PC-9 (cell line): ENCODE measurements at regions of chr6 and their contacts with region 1.

Region 1: DNA sequence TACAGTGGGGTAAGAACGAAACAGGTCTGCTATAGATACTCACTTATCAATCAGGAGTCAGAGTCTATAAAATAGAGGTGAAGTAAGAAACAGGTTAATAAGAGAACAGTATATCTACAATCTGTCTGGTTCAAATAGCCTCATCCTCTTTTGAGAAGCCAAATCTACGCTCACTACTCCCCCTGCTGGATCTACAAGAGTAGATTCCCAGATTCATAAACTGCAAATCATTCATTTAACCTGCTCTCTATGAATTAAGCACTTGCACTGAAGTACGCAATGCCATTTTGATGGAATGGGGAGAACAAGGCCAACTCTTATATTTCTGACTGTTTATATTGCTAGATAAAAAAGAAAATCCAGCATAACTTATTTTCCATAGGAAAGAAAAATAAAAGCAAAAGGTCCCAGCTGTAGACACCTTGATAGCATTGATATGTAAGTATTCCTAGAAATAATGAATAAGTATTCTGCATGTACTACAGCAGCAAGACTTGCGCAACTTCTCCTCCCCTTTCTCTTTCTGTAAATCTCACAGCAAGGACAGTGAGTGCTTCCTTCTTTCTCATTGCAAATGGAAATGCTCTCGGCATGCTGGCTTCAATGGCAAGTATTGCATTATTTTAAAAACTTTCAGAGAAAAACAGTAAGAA is 92.3 kb downstream of the RFX6 start:
- DNase-seq: peak in 1 of 2 experiments; percentile 15
- H3K4me3 ChIP-seq: no peak overlapping the region
- H3K27ac ChIP-seq: no peak overlapping the region
- H3K4me1 ChIP-seq: no peaks in the 10 kb centered on the region
- H3K27me3 ChIP-seq: no peaks in the 10 kb centered on the region
- CTCF ChIP-seq: peak; percentile 90

Region 2: DNA sequence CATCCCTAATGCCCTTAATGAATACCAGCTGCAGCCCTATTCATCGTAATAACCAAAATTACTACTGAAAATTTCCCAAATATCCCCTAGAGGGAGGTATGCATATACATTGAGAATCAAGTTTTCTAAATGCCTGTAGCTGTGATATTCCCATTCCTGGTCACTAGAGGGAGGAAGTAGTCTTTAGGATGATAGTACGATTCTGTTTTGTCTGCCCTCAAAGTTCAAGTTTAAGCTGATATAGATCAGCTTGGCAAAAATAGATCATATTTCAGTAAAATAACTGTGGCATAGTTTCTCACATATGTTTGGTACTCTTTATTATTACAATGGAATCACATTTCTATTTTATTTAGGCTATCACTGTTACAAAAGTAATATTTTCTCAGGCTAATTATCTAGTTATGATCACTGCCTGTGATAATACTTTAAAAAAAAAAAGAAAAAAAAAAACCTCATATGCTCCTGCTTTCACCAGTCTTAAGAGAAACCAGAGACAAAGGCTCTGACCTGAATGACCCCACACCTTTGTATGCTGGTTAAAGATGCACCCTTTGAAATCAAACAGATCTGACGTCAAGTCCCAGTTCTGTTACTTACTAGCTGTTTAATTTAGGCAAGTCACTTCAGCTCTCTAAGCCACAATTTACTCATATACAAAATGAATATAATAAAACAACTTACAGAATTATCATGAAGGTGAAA is 700.6 kb before region 1 on chr6:
- CTCF ChIA-PET with region 1: no interaction called
- POLR2A ChIA-PET with region 1: no interaction called
- intact Hi-C with region 1: loop called (anchors 2 kb)
- DNase-seq: peak in 1 of 2 experiments; percentile 83
- H3K4me3 ChIP-seq: no peak overlapping the region
- H3K27ac ChIP-seq: no peak overlapping the region
- H3K4me1 ChIP-seq: peaks cover 6% of the 10 kb centered on the region; the same call in 1 of the 2 replicates
- H3K27me3 ChIP-seq: no peaks in the 10 kb centered on the region
- CTCF ChIP-seq: peak; percentile 98

Region 3: DNA sequence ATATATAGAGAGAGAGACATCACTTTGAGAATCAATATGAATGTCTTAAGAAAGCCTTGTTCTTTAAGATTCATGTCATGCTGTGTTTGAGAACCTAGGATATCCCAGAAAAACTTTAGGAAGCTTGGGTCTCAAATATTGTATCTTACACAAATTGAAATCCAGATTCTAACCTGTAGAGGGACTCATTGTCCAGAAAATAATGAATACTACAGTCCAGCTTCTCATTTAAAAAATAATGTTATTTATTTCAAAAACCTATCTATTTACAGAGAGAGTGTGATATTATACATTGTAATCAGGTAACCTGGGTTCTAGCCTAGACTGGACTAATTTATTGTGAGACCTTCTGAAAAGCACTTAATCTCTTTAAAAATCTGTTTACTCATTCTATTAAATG is 88.1 kb before region 1 on chr6:
- CTCF ChIA-PET with region 1: no interaction called
- POLR2A ChIA-PET with region 1: no interaction called
- intact Hi-C with region 1: loop called (anchors 2 kb)
- DNase-seq: no peak
- H3K4me3 ChIP-seq: no peak overlapping the region
- H3K27ac ChIP-seq: no peak overlapping the region
- H3K4me1 ChIP-seq: no peaks in the 10 kb centered on the region
- H3K27me3 ChIP-seq: peaks cover 18% of the 10 kb centered on the region
- CTCF ChIP-seq: peak; percentile 59

Region 4: GRCh38 chr6:117188627-117189201 is 219.4 kb after region 1 on chr6:
- CTCF ChIA-PET with region 1: no interaction called
- POLR2A ChIA-PET with region 1: no interaction called
- intact Hi-C with region 1: loop called (anchors 2 kb)
- DNase-seq: no peak
- H3K4me3 ChIP-seq: no peak overlapping the region
- H3K27ac ChIP-seq: no peak overlapping the region
- H3K4me1 ChIP-seq: no peaks in the 10 kb centered on the region
- H3K27me3 ChIP-seq: no peaks in the 10 kb centered on the region
- CTCF ChIP-seq: peak; percentile 79

Region 5: GRCh38 chr6:117602151-117602898 is 633.0 kb after region 1 on chr6 and contains the start of gene GOPC:
- CTCF ChIA-PET with region 1: interaction called, 3 read pairs
- POLR2A ChIA-PET with region 1: no interaction called
- intact Hi-C with region 1: loop called (anchors 5 kb)
- DNase-seq: peak; percentile 94 to 97
- H3K4me3 ChIP-seq: peak within 1 kb of the TSS; percentile 58
- H3K27ac ChIP-seq: peak within 1 kb of the TSS; percentile 62
- H3K4me1 ChIP-seq: peaks cover 31% of the 10 kb centered on the region; the same call in 1 of the 2 replicates
- H3K27me3 ChIP-seq: no peaks in the 10 kb centered on the region
- CTCF ChIP-seq: 0 out of 2 replicates have a peak, but pooled peaks have one; percentile 33
- total RNA-seq, gene GOPC: 10.8 and 14.1 TPM in 2 replicates